ENCODE measurements at regions of chr19 and their contacts with region 1.

Region 1: GRCh38 chr19:12847159-12848139 is 9.1 kb downstream of the MAST1 start:
- DNase-seq: peak; percentile 83
- H3K4me3 Mint-ChIP-seq: peak overlapping the region; percentile 21
- H3K27ac Mint-ChIP-seq: no peak overlapping the region
- H3K4me1 Mint-ChIP-seq: peaks cover 7% of the 10 kb centered on the region
- H3K27me3 Mint-ChIP-seq: peaks cover 13% of the 10 kb centered on the region

Region 2: DNA sequence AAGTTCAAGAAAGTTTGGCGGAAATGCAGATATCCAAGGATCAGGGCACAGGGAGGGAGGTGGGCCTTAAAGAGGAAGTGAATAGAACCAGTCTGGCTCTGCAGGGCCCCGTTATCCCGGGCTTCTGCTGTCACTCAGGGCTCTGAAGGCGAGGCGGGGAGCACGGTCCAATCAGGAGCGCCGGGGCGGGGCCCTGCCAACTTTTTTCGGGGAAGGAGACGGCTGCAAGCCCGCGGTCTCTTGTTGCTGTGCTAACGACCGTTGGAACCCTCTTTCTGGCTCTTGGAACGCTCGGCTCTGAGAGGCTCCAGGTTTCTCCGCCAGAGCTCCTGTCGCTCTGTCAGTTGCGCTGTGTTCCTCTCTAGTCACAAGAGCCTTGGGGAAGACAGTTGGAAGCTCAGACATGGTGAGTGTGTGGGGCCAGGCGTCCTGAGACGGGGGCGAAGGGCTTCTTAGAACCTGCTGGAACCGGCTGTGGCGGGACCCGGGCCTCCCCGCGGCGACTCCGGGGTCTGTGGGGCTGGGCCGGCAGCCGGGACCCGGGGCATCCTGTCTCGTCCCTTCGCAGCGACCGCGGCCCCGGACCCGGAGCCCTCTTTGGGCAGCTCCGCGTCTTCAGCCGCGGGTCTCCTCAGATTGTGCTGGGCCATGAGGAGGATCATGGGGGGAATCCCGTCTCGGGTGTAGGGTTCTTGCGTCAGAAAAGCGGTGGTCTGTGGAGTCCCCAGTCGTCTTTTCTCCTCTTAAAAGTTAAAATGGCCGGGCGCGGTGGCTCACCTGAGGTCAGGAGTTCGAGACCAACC is 755.2 kb before region 1 on chr19:
- CTCF ChIA-PET with region 1: no interaction called
- POLR2A ChIA-PET with region 1: no interaction called
- DNase-seq: peak; percentile 69
- H3K4me3 Mint-ChIP-seq: peak overlapping the region; percentile 73
- H3K27ac Mint-ChIP-seq: peak overlapping the region; percentile 60
- H3K4me1 Mint-ChIP-seq: peaks cover 12% of the 10 kb centered on the region
- H3K27me3 Mint-ChIP-seq: peaks cover 1% of the 10 kb centered on the region

Region 3: DNA sequence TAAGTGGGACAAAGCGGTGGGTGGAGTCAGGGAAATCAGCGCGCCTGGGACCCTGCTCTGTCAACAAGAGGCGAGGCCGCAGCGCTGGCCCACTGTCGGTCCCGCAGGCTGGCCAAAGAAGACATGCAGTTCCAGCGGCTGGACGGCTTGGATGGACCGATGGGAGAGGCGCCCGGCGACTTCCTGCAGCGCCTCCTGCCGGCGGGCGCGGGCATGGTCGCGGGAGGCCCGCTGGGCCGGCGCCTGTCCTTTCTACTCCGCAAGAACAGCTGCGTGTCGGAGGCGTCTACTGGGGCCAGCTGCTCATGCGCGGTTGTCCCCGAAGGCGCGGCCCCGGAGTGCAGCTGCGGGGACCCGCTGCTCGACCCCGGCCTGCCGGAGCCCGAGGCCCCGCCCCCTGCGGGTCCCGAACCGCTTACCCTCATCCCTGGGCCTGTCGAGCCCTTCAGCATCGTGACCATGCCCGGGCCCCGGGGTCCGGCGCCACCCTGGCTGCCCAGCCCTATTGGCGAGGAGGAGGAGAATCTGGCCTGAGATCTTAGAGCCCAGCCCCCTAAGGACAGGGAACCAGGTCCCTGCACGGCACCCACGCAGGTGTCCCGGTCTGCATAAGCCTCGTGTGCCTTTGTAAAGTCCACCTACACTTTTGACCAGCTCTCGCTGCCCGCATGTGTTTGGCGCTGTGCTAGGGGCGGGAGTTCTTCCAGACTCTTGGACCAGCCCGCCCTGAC is 89.7 kb before region 1 on chr19:
- CTCF ChIA-PET with region 1: interaction called, 32 read pairs
- POLR2A ChIA-PET with region 1: interaction called, 11 read pairs
- DNase-seq: peak; percentile 71
- H3K4me3 Mint-ChIP-seq: peak overlapping the region; percentile 49
- H3K27ac Mint-ChIP-seq: no peak overlapping the region
- H3K4me1 Mint-ChIP-seq: peaks cover 11% of the 10 kb centered on the region
- H3K27me3 Mint-ChIP-seq: peaks cover 4% of the 10 kb centered on the region

Region 4: DNA sequence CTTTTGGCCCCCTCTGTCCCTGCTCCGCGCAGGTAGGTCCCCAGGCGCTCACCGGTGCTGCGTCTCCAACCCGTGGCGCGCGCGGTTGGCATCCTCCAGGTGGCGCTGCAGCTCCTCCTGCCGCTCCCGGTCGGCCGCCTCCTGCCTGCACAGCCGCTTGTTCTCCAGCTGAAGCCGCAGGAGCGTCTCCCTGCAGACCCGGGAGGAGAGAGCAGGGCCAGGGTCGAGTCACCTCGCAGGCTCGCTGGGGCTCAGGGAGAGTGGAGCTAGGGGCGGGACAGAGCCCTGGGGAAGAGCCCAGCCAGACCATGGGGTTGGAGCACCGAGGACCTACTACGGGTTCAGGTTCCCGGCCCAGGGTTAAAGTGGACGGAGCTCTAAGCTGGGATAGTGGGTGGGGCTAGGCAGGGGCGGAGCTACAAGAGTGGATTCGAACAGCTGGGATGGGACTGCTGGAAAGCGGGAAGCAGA is 81.4 kb before region 1 on chr19:
- CTCF ChIA-PET with region 1: interaction called, 51 read pairs
- POLR2A ChIA-PET with region 1: interaction called, 11 read pairs
- DNase-seq: peak; percentile 86
- H3K4me3 Mint-ChIP-seq: peak overlapping the region; percentile 24
- H3K27ac Mint-ChIP-seq: no peak overlapping the region
- H3K4me1 Mint-ChIP-seq: peaks cover 16% of the 10 kb centered on the region
- H3K27me3 Mint-ChIP-seq: no peaks in the 10 kb centered on the region

Region 5: DNA sequence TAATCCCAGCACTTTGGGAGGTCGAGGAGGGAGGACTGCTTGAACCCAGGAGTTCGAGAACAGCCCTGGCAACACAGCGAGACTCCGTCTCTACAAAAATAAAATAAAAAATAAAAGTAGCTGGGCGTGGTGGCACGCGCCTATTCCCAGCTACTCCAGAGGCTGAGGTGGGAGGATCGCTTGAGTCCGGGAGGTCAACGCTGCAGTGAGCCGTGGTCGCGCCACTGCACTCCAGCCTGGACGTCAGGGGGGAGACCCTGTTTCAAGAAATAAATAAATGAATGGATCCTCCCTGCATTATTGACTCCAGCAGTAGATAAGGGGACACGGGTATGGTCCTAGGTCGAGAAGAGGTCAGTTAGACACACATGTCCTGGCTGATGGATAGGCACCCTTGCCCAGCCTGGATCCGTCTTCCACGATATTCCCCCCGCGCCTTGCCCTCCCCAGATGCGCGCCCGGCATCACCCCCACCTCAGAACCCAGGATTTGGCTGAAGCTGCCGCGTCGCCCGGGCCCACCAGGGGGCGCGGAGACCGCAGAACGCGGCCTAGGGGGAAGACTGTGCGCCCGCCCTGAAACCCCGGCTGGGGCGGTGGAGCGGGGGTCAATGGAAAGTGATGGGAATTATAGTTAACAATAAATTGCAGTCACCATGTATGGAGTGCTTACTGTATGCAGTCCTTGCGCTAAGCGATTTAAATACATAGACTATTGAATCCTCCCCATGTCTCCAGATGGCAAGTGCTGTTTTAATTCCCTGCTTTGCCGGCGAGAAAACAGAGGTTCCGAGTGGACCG is 70.0 kb before region 1 on chr19:
- CTCF ChIA-PET with region 1: interaction called, 15 read pairs
- POLR2A ChIA-PET with region 1: no interaction called
- DNase-seq: peak; percentile 85
- H3K4me3 Mint-ChIP-seq: peak overlapping the region; percentile 83
- H3K27ac Mint-ChIP-seq: peak overlapping the region; percentile 92
- H3K4me1 Mint-ChIP-seq: peaks cover 44% of the 10 kb centered on the region
- H3K27me3 Mint-ChIP-seq: no peaks in the 10 kb centered on the region

Region 6: GRCh38 chr19:12806239-12807081 is 41.0 kb before region 1 on chr19 and contains the start of gene RNASEH2A:
- CTCF ChIA-PET with region 1: interaction called, 16 read pairs
- POLR2A ChIA-PET with region 1: no interaction called
- DNase-seq: peak; percentile 92
- H3K4me3 Mint-ChIP-seq: peak within 1 kb of the TSS; percentile 95
- H3K27ac Mint-ChIP-seq: peak within 1 kb of the TSS; percentile 83
- H3K4me1 Mint-ChIP-seq: peaks cover 32% of the 10 kb centered on the region
- H3K27me3 Mint-ChIP-seq: no peaks in the 10 kb centered on the region
- total RNA-seq, gene RNASEH2A: 34.8 to 38.4 TPM

Region 7: DNA sequence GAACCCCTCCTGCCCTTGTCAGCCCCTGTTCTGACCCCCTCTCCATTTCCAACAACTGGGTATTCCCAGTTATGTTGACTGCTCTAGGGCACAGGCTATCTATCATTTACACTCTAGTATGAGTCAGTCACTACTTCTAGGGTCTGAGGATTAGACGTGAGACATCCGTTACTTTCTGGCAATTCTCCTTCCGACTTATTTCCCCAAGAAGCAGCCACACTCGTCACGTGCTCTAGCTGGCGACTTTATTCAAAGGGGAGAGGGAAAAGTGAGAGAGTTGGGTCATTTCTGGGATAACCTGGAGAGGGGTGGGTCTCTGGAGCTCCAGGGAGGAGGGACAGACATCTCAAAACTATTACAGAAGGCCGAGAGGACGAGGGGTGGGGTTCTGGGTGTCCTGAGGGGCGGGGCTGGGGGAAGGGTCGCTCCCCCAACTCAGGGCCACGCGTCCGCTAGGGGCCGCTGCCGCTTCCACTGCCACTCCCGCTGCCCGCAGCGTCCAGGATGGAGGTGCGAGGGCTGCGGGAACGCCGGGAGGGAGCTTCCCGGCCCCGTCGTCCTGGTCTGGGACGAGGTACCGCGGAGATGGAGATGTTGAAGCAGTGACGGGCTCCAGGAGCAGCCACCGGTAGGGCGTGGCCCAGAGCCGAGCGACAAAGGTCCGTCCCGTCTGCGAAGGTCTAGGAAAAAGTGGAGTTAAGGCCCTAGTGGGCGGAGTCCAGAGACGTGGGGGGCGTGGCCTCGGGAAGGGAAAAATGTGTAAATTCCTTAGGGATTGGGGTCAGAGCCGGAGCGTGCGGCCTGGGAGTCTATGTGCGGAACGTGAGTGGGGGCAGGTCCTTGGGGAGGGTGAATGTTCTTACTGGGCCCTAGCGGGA is 22.0 kb before region 1 on chr19:
- CTCF ChIA-PET with region 1: interaction called, 10 read pairs
- POLR2A ChIA-PET with region 1: no interaction called
- DNase-seq: no peak
- H3K4me3 Mint-ChIP-seq: no peak overlapping the region
- H3K27ac Mint-ChIP-seq: no peak overlapping the region
- H3K4me1 Mint-ChIP-seq: peaks cover 9% of the 10 kb centered on the region
- H3K27me3 Mint-ChIP-seq: peaks cover 19% of the 10 kb centered on the region

Region 8: DNA sequence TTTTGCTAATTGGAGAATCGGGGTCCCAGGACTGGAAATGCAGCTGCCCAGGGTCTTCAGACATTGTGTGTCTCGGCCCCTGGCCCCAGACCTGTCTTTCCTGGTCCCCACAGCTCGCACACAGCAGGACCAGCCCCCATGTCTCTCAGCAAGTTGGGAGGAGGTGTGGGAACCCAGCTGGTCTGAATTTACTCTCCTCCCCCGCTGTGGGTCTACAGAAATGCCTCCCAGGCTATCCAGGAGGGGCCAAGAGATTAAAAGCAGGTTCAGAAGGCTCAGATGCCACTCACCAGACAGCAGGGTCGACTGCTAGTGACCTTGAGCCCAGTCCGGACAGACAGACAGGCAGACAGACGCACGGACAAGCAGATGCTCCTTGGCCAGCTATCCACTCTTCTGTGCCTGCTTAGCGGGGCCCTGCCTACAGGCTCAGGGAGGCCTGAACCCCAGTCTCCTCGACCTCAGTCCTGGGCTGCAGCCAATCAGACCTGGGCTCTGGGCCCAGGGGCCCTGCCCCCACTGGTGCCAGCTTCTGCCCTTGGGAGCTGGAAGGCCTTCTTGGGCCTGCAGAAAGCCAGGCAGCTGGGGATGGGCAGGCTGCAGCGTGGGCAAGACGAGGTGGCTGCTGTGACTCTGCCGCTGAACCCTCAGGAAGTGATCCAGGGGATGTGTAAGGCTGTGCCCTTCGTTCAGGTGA is 122.0 kb after region 1 on chr19 and contains the start of gene DAND5:
- CTCF ChIA-PET with region 1: no interaction called
- POLR2A ChIA-PET with region 1: no interaction called
- DNase-seq: no peak
- H3K4me3 Mint-ChIP-seq: no peak within 1 kb of the TSS
- H3K27ac Mint-ChIP-seq: no peak within 1 kb of the TSS
- H3K4me1 Mint-ChIP-seq: peaks cover 8% of the 10 kb centered on the region
- H3K27me3 Mint-ChIP-seq: no peaks in the 10 kb centered on the region
- total RNA-seq, gene DAND5: 0.13 to 0.15 TPM

Region 9: DNA sequence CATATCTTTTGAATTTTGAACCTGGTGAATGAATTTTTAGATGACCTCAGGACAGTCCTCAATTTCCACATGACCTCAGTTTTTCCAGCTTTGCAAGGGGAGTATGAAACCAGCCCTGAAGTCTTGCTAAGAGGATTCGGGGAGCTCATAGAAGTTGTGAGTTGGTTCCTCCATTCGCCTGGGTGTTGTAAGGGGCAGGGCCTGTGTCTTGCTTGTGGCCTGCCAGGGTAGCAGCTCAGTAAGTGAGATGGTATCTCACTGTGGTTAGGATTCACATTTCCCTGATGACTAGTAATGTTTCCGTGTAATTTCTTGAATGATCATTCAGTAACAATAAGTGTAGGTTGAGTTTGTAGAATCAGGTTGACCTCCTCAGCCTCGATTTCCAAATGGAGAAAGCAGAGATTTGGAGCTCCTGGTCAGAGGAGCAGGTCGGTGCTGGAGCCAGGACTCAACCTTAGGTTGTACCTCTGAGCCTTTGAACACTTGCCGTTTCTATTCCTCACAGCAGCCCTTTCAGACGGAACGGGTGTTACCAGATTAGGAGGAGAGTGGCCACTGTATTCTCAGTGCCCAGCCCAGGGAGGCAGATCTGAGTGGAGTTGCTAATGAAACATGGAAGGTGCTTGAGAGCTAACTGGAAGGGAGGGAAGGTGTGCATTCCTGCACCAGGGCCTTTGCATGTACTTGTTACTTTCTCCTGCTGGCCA is 285.2 kb after region 1 on chr19:
- CTCF ChIA-PET with region 1: no interaction called
- POLR2A ChIA-PET with region 1: no interaction called
- DNase-seq: peak; percentile 78
- H3K4me3 Mint-ChIP-seq: peak overlapping the region; percentile 61
- H3K27ac Mint-ChIP-seq: peak overlapping the region; percentile 91
- H3K4me1 Mint-ChIP-seq: peaks cover 45% of the 10 kb centered on the region
- H3K27me3 Mint-ChIP-seq: no peaks in the 10 kb centered on the region

Measured in activated CD4-positive, alpha-beta memory T cell treated with anti-CD3 and anti-CD28 coated beads, Interleukin-2, amount 10 ng/mL, durations not matched to agents 7 days and 5 days (primary cell).